Activated CD4-positive, alpha-beta T cell treated with anti-CD3 and anti-CD28 coated beads, Interleukin-2, amount 10 ng/mL, durations not matched to agents 24 days and 14 days (primary cell): ENCODE measurements at regions of chr11 and their contacts with region 1.

Region 1: GRCh38 chr11:6389921-6390724 is at the start of gene SMPD1:
- DNase-seq: peak; percentile 97
- H3K4me3 Mint-ChIP-seq: peak within 1 kb of the TSS; percentile 85
- H3K27ac Mint-ChIP-seq: peak within 1 kb of the TSS; percentile 94
- H3K4me1 Mint-ChIP-seq: peaks cover 36% of the 10 kb centered on the region
- H3K27me3 Mint-ChIP-seq: no peaks in the 10 kb centered on the region
- total RNA-seq, gene SMPD1: 9.4 and 10.0 TPM in 2 replicates

Region 2: GRCh38 chr11:6084587-6084986 is 305.5 kb before region 1 on chr11:
- intact Hi-C with region 1: no loop called
- DNase-seq: no peak
- H3K4me3 Mint-ChIP-seq: no peak overlapping the region
- H3K27ac Mint-ChIP-seq: no peak overlapping the region
- H3K4me1 Mint-ChIP-seq: no peaks in the 10 kb centered on the region
- H3K27me3 Mint-ChIP-seq: peaks cover under 1% of the 10 kb centered on the region

Region 3: GRCh38 chr11:6402561-6402981 is 12.4 kb after region 1 on chr11:
- intact Hi-C with region 1: loop called (anchors 1 kb)
- DNase-seq: peak; percentile 95
- H3K4me3 Mint-ChIP-seq: peak overlapping the region; percentile 85
- H3K27ac Mint-ChIP-seq: peak overlapping the region; percentile 96
- H3K4me1 Mint-ChIP-seq: peaks cover 57% of the 10 kb centered on the region
- H3K27me3 Mint-ChIP-seq: no peaks in the 10 kb centered on the region

Region 4: GRCh38 chr11:6419009-6419631 is 29.0 kb after region 1 on chr11 and contains the start of gene APBB1:
- intact Hi-C with region 1: loop called (anchors 1 kb)
- DNase-seq: peak; percentile 93
- H3K4me3 Mint-ChIP-seq: no peak within 1 kb of the TSS
- H3K27ac Mint-ChIP-seq: peak within 1 kb of the TSS; percentile 45
- H3K4me1 Mint-ChIP-seq: peaks cover 3% of the 10 kb centered on the region
- H3K27me3 Mint-ChIP-seq: peaks cover 33% of the 10 kb centered on the region
- total RNA-seq, gene APBB1: 24.1 TPM in 2 replicates

Region 5: GRCh38 chr11:6481012-6481923 is 91.1 kb after region 1 on chr11 and contains the starts of genes ARFIP2 and TIMM10B:
- intact Hi-C with region 1: loop called (anchors 1 kb)
- DNase-seq: peak; percentile 99
- H3K4me3 Mint-ChIP-seq: peak within 1 kb of the TSS; percentile 94
- H3K27ac Mint-ChIP-seq: peak within 1 kb of the TSS; percentile 98
- H3K4me1 Mint-ChIP-seq: peaks cover 30% of the 10 kb centered on the region
- H3K27me3 Mint-ChIP-seq: no peaks in the 10 kb centered on the region
- total RNA-seq, gene ARFIP2: 50.8 and 51.2 TPM in 2 replicates
- total RNA-seq, gene TIMM10B: 41.3 and 47.4 TPM in 2 replicates

Region 6: DNA sequence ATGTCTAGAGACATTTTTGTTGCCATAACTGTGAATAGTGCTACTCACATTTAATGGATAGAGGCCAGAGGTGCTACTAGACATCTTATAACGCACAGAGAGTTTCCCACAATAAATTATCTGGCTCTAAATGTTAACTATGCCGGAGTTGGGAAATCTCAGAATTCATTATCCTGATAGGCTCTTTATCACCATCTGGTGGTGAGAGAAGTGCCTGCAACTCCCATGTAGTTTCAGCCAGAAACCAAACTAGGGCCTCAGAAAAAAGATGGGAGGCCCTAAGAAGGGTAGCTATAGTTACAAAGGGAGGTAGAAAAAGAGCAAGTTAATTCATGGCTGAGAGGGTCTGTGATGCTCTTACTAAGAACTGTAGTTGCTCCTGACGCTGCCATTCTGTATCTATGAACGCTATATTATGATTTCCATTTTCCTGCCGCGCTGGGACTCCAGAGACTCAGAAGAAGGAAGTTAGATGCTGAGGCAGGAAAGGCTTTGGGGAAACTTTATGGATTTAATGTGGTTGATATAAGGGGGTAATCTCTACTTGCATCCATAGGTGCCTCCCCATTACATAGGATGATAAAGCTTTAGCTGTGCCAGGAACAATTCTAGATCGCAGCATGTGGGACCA is 315.9 kb after region 1 on chr11:
- intact Hi-C with region 1: no loop called
- DNase-seq: peak; percentile 82
- H3K4me3 Mint-ChIP-seq: no peak overlapping the region
- H3K27ac Mint-ChIP-seq: no peak overlapping the region
- H3K4me1 Mint-ChIP-seq: peaks cover 4% of the 10 kb centered on the region
- H3K27me3 Mint-ChIP-seq: no peaks in the 10 kb centered on the region

Region 7: GRCh38 chr11:6737872-6738466 is 347.8 kb after region 1 on chr11:
- intact Hi-C with region 1: no loop called
- DNase-seq: peak; percentile 91
- H3K4me3 Mint-ChIP-seq: no peak overlapping the region
- H3K27ac Mint-ChIP-seq: peak overlapping the region; percentile 45
- H3K4me1 Mint-ChIP-seq: peaks cover 80% of the 10 kb centered on the region
- H3K27me3 Mint-ChIP-seq: no peaks in the 10 kb centered on the region